CD4-positive, alpha-beta T cell (primary cell): ENCODE measurements at regions of chr15 and their contacts with region 1.

Region 1: GRCh38 chr15:38563723-38564519 is 693 bp downstream of the RASGRP1 start:
- DNase-seq: peak; percentile 75 to 93 (median 87)
- ATAC-seq: peak; percentile 63
- H3K4me3 ChIP-seq: peak overlapping the region; percentile 95
- H3K4me3 Mint-ChIP-seq: peak overlapping the region; percentile 98
- H3K27ac ChIP-seq: peak overlapping the region; percentile 57 to 93
- H3K27ac Mint-ChIP-seq: peak overlapping the region; percentile 93
- H3K4me1 ChIP-seq: peaks cover 54% of the 10 kb centered on the region
- H3K4me1 Mint-ChIP-seq: peaks cover 77% of the 10 kb centered on the region
- H3K27me3 ChIP-seq: no peaks in the 10 kb centered on the region
- H3K27me3 Mint-ChIP-seq: no peaks in the 10 kb centered on the region
- CTCF ChIP-seq: peak; percentile 90

Region 2: GRCh38 chr15:38320181-38320580 is 243.7 kb before region 1 on chr15:
- CTCF ChIA-PET with region 1: no interaction called
- POLR2A ChIA-PET with region 1: no interaction called
- intact Hi-C with region 1: no loop called
- DNase-seq: no peak
- ATAC-seq: no peak
- H3K4me3 ChIP-seq: no peak overlapping the region
- H3K4me3 Mint-ChIP-seq: no peak overlapping the region
- H3K27ac ChIP-seq: no peak overlapping the region
- H3K27ac Mint-ChIP-seq: no peak overlapping the region
- H3K4me1 ChIP-seq: no peaks in the 10 kb centered on the region
- H3K4me1 Mint-ChIP-seq: no peaks in the 10 kb centered on the region
- H3K27me3 ChIP-seq: no peaks in the 10 kb centered on the region
- H3K27me3 Mint-ChIP-seq: peaks cover 6% of the 10 kb centered on the region
- CTCF ChIP-seq: no peak

Region 3: DNA sequence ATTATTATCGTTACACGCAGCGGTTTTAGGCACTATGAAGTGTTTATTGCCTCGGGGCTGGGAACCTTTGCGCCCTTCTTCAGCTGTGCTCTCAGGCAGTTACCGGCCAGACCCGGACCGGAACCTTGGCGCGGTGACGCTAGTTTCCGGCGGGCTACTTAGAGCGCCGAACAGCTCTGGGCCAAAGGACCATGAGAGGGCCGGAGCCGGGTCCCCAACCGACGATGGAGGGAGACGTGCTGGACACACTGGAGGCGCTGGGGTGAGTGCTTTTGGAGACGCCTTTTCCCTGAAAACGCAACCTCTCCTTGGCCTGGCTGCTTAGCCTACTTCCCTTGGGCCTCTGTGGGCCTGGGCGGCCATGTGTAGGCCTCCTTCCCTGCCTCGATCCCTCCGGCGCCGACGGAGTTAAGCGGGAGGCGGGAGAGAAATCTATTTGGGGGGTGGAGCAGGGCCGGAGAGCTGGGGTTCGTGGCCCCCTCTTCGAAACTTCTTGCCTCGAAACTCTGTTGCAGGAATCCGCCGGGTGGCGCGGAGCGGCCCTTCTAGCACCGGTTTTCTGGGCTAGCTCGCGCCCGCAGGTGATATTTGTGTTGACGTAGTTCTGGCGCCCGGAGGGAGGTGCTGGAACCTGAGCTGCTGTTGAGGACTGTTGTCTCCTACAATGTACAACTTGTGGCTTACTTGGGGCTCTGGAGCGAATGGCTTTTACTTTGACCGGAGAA is 109.8 kb before region 1 on chr15 and contains the start of gene FAM98B:
- CTCF ChIA-PET with region 1: interaction called, 11 read pairs
- POLR2A ChIA-PET with region 1: interaction called, 4 read pairs
- intact Hi-C with region 1: no loop called
- DNase-seq: peak; percentile 72 to 90 (median 84)
- ATAC-seq: peak; percentile 90
- H3K4me3 ChIP-seq: peak within 1 kb of the TSS; percentile 80
- H3K4me3 Mint-ChIP-seq: peak within 1 kb of the TSS; percentile 94
- H3K27ac ChIP-seq: peak within 1 kb of the TSS; percentile 75 to 77
- H3K27ac Mint-ChIP-seq: peak within 1 kb of the TSS; percentile 95
- H3K4me1 ChIP-seq: peaks cover 14% of the 10 kb centered on the region
- H3K4me1 Mint-ChIP-seq: peaks cover 40% of the 10 kb centered on the region
- H3K27me3 ChIP-seq: no peaks in the 10 kb centered on the region
- H3K27me3 Mint-ChIP-seq: no peaks in the 10 kb centered on the region
- CTCF ChIP-seq: no peak
- total RNA-seq, gene FAM98B: 20.1 to 20.4 TPM

Region 4: DNA sequence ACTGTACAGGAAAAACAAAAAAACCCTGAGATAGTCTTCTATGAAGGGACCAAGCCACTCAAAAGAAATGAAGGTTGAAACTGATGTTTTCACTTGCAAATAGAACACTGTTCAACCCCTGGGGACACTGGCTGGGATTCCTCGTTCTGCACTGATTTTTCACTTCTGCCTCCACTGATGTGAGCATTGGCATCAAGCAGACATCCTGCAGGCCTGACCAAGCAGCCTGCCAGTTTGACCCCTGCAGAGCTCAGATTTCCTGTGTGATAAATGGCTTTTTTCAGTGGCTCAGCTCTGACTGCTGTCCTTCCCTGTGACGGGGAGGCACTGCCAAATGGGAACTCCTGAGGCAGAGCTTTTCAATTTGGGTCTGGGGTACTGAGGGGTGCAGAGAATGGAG is 49.3 kb before region 1 on chr15:
- CTCF ChIA-PET with region 1: interaction called, 10 read pairs
- POLR2A ChIA-PET with region 1: interaction called, 4 read pairs
- intact Hi-C with region 1: loop called in 1 of 2 experiments (anchors 5 kb)
- DNase-seq: no peak
- ATAC-seq: no peak
- H3K4me3 ChIP-seq: no peak overlapping the region
- H3K4me3 Mint-ChIP-seq: no peak overlapping the region
- H3K27ac ChIP-seq: no peak overlapping the region
- H3K27ac Mint-ChIP-seq: peak overlapping the region; percentile 75
- H3K4me1 ChIP-seq: no peaks in the 10 kb centered on the region
- H3K4me1 Mint-ChIP-seq: peaks cover 8% of the 10 kb centered on the region
- H3K27me3 ChIP-seq: no peaks in the 10 kb centered on the region
- H3K27me3 Mint-ChIP-seq: no peaks in the 10 kb centered on the region
- CTCF ChIP-seq: no peak

Region 5: DNA sequence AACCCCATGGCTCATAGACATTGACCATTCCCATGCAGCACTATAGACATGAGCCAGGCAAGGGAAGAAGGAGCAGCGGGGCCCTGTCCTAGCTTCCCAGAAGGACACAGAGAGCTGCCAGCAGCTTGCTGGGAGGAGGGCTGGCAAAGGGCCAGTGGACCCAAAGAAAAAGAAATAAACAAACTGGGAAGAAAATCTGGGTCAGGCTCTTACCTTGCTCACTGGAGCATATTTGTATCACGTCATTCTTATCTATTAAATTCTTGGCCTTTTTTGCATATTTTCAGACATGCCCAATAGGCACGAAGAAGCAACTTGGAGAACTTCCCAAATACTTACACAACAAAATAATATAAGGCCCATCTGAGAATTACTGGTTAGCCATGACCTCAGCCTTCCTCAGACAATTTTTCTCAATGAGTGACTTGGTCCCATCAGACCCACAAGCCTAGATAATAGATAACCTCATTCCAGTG is 27.7 kb before region 1 on chr15:
- CTCF ChIA-PET with region 1: interaction called, 20 read pairs
- POLR2A ChIA-PET with region 1: interaction called, 8 read pairs
- intact Hi-C with region 1: no loop called
- DNase-seq: no peak
- ATAC-seq: no peak
- H3K4me3 ChIP-seq: no peak overlapping the region
- H3K4me3 Mint-ChIP-seq: peak overlapping the region; percentile 62
- H3K27ac ChIP-seq: no peak overlapping the region
- H3K27ac Mint-ChIP-seq: peak overlapping the region; percentile 80
- H3K4me1 ChIP-seq: peaks cover 86% of the 10 kb centered on the region
- H3K4me1 Mint-ChIP-seq: peaks cover 100% of the 10 kb centered on the region
- H3K27me3 ChIP-seq: no peaks in the 10 kb centered on the region
- H3K27me3 Mint-ChIP-seq: no peaks in the 10 kb centered on the region
- CTCF ChIP-seq: no peak

Region 6: GRCh38 chr15:38631126-38632075 is 67.5 kb after region 1 on chr15:
- CTCF ChIA-PET with region 1: interaction called, 6 read pairs
- POLR2A ChIA-PET with region 1: interaction called, 14 read pairs
- intact Hi-C with region 1: no loop called
- DNase-seq: peak in 2 of 14 experiments; percentile 29 to 38
- ATAC-seq: peak; percentile 21
- H3K4me3 ChIP-seq: no peak overlapping the region
- H3K4me3 Mint-ChIP-seq: no peak overlapping the region
- H3K27ac ChIP-seq: peak overlapping the region in 1 of 2 donors; percentile 13
- H3K27ac Mint-ChIP-seq: peak overlapping the region; percentile 62
- H3K4me1 ChIP-seq: peaks cover 26% of the 10 kb centered on the region
- H3K4me1 Mint-ChIP-seq: peaks cover 25% of the 10 kb centered on the region
- H3K27me3 ChIP-seq: no peaks in the 10 kb centered on the region
- H3K27me3 Mint-ChIP-seq: no peaks in the 10 kb centered on the region
- CTCF ChIP-seq: no peak

Region 7: GRCh38 chr15:38671675-38672254 is 107.8 kb after region 1 on chr15:
- CTCF ChIA-PET with region 1: interaction called, 51 read pairs
- POLR2A ChIA-PET with region 1: interaction called, 66 read pairs
- intact Hi-C with region 1: no loop called
- DNase-seq: peak in 11 of 14 experiments; percentile 23 to 91 (median 44)
- ATAC-seq: peak; percentile 51
- H3K4me3 ChIP-seq: no peak overlapping the region
- H3K4me3 Mint-ChIP-seq: peak overlapping the region; percentile 61
- H3K27ac ChIP-seq: peak overlapping the region; percentile 85 to 94
- H3K27ac Mint-ChIP-seq: peak overlapping the region; percentile 95
- H3K4me1 ChIP-seq: peaks cover 80% of the 10 kb centered on the region
- H3K4me1 Mint-ChIP-seq: peaks cover 68% of the 10 kb centered on the region
- H3K27me3 ChIP-seq: no peaks in the 10 kb centered on the region
- H3K27me3 Mint-ChIP-seq: no peaks in the 10 kb centered on the region
- CTCF ChIP-seq: no peak

Region 8: GRCh38 chr15:38699633-38700230 is 135.8 kb after region 1 on chr15:
- CTCF ChIA-PET with region 1: interaction called, 30 read pairs
- POLR2A ChIA-PET with region 1: interaction called, 29 read pairs
- intact Hi-C with region 1: no loop called
- DNase-seq: peak; percentile 53 to 88 (median 62)
- ATAC-seq: peak; percentile 59
- H3K4me3 ChIP-seq: no peak overlapping the region
- H3K4me3 Mint-ChIP-seq: peak overlapping the region; percentile 2
- H3K27ac ChIP-seq: peak overlapping the region in 1 of 2 donors; percentile 7
- H3K27ac Mint-ChIP-seq: peak overlapping the region; percentile 55
- H3K4me1 ChIP-seq: peaks cover 50% of the 10 kb centered on the region
- H3K4me1 Mint-ChIP-seq: peaks cover 50% of the 10 kb centered on the region
- H3K27me3 ChIP-seq: no peaks in the 10 kb centered on the region
- H3K27me3 Mint-ChIP-seq: no peaks in the 10 kb centered on the region
- CTCF ChIP-seq: peak; percentile 96